ENCODE measurements at regions of chr1 and their contacts with region 1.

Region 1: GRCh38 chr1:174217787-174218574 is 58.7 kb downstream of the RABGAP1L start:
- DNase-seq: peak in 6 of 9 donors; percentile 2 to 46 (median 34)
- ATAC-seq: peak; percentile 69
- H3K4me3 ChIP-seq: no peak overlapping the region
- H3K4me3 Mint-ChIP-seq: no peak overlapping the region
- H3K27ac ChIP-seq: no peak overlapping the region
- H3K27ac Mint-ChIP-seq: no peak overlapping the region
- H3K4me1 ChIP-seq: no peaks in the 10 kb centered on the region
- H3K4me1 Mint-ChIP-seq: peaks cover 0 to 8% (median 0%) of the 10 kb centered on the region in 7 donors
- H3K27me3 ChIP-seq: no peaks in the 10 kb centered on the region
- H3K27me3 Mint-ChIP-seq: no peaks in the 10 kb centered on the region

Region 2: DNA sequence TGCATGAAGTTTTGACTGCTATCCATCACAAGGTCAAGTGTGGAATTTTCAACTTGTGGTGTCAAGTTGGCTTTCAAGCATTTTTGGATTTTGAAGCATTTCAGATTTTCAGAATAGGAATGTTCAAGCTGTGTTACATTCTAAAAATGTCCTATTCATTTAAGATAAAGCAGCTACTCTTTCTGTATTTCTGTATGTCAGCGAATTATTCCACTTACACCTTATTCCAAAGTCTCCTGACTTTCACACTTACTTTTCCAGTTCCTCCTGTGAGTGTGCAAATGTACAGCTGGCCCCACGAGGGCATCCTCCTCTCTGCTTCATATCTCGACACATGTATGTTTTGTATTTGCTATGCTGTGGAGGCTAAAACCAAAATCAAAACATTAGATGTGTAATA is 247.7 kb before region 1 on chr1:
- CTCF ChIA-PET with region 1: interaction called, 3 read pairs
- POLR2A ChIA-PET with region 1: no interaction called
- intact Hi-C with region 1: loop called in 1 of 2 experiments (anchors 5 kb)
- DNase-seq: no peak
- ATAC-seq: no peak
- H3K4me3 ChIP-seq: no peak overlapping the region
- H3K4me3 Mint-ChIP-seq: no peak overlapping the region
- H3K27ac ChIP-seq: no peak overlapping the region
- H3K27ac Mint-ChIP-seq: peak overlapping the region in 4 of 9 donors; percentile 45 to 65 (median 52)
- H3K4me1 ChIP-seq: no peaks in the 10 kb centered on the region
- H3K4me1 Mint-ChIP-seq: peaks cover 0 to 8% (median 4%) of the 10 kb centered on the region in 7 donors
- H3K27me3 ChIP-seq: no peaks in the 10 kb centered on the region
- H3K27me3 Mint-ChIP-seq: no peaks in the 10 kb centered on the region

Region 3: DNA sequence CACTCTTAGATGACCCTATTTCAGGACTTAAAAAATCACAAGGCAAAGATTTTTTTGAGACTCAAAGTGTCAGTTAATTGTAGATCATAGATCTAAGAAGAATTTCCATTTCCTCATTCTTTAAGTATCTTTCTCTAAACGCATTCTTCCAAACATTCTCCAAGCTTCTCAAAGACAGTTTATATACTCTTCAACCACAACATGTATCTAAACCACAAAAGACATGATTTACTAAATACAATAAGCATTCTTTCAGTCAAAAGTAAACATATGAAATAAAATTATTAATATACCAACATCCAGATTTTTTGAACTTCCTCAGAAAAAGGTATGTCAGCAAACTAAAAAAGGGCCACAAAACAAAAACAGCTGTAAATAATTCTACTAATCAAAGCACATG is 220.2 kb before region 1 on chr1:
- CTCF ChIA-PET with region 1: no interaction called
- POLR2A ChIA-PET with region 1: no interaction called
- intact Hi-C with region 1: loop called in 1 of 2 experiments (anchors 5 kb)
- DNase-seq: no peak
- ATAC-seq: no peak
- H3K4me3 ChIP-seq: no peak overlapping the region
- H3K4me3 Mint-ChIP-seq: no peak overlapping the region
- H3K27ac ChIP-seq: peak overlapping the region; percentile 20
- H3K27ac Mint-ChIP-seq: peak overlapping the region in 5 of 9 donors; percentile 1 to 76 (median 10)
- H3K4me1 ChIP-seq: peaks cover 0 to 5% of the 10 kb centered on the region in 2 donors
- H3K4me1 Mint-ChIP-seq: peaks cover 27 to 66% (median 49%) of the 10 kb centered on the region in 7 donors
- H3K27me3 ChIP-seq: no peaks in the 10 kb centered on the region
- H3K27me3 Mint-ChIP-seq: no peaks in the 10 kb centered on the region

Region 4: GRCh38 chr1:174097426-174097825 is 120.6 kb before region 1 on chr1:
- CTCF ChIA-PET with region 1: no interaction called
- POLR2A ChIA-PET with region 1: no interaction called
- intact Hi-C with region 1: loop called in 1 of 2 experiments (anchors 5 kb)
- DNase-seq: no peak
- ATAC-seq: no peak
- H3K4me3 ChIP-seq: no peak overlapping the region
- H3K4me3 Mint-ChIP-seq: no peak overlapping the region
- H3K27ac ChIP-seq: no peak overlapping the region
- H3K27ac Mint-ChIP-seq: no peak overlapping the region
- H3K4me1 ChIP-seq: no peaks in the 10 kb centered on the region
- H3K4me1 Mint-ChIP-seq: no peaks in the 10 kb centered on the region
- H3K27me3 ChIP-seq: no peaks in the 10 kb centered on the region
- H3K27me3 Mint-ChIP-seq: peaks cover 0 to 19% (median 4%) of the 10 kb centered on the region in 5 donors

Region 5: GRCh38 chr1:174308604-174309003 is 90.6 kb after region 1 on chr1:
- CTCF ChIA-PET with region 1: no interaction called
- POLR2A ChIA-PET with region 1: no interaction called
- intact Hi-C with region 1: no loop called
- DNase-seq: no peak
- ATAC-seq: no peak
- H3K4me3 ChIP-seq: no peak overlapping the region
- H3K4me3 Mint-ChIP-seq: no peak overlapping the region
- H3K27ac ChIP-seq: no peak overlapping the region
- H3K27ac Mint-ChIP-seq: no peak overlapping the region
- H3K4me1 ChIP-seq: no peaks in the 10 kb centered on the region
- H3K4me1 Mint-ChIP-seq: peaks cover 0 to 10% (median 0%) of the 10 kb centered on the region in 7 donors
- H3K27me3 ChIP-seq: no peaks in the 10 kb centered on the region
- H3K27me3 Mint-ChIP-seq: no peaks in the 10 kb centered on the region